ENCODE measurements at regions of chr17 and their contacts with region 1.

Region 1: DNA sequence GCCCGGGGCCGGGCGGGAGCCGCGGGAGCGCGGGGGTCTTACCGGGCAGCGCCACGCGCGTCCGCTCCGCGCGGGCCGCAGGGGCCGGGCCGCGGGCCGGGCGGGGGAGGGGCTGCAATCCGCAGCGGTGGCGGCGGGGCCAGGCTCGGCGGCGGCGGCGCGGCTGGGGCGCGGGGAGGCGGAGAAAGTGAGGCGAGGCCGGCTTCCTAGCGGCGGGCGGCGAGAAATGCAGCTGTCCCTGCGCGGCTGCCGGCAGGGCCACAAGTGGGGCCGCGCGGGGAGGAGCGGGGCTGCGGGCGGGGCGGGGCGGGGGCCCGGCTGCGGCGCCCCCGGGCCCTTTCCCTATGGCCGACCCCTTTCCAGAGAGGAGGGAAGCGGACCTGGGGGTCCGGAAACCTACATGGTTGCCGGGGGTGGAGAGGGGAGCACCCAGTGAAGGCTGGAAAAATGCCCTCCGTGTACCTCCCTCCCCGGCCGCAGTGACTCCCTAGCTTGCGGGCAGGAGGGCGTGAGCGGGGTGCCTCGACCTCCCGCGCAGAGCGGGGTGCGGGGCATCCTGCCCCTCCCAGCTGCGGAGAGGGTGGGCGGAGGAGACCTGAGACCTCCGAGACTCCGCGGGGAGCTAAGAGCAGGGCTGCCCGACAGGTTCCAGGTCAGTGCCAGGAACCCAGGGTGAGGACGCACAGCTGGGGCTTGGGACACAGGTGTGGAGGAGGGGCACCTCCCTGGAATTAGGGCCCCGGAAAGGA is at the start of gene CUEDC1:
- DNase-seq: peak; percentile 50 to 93 (median 86)

Region 2: DNA sequence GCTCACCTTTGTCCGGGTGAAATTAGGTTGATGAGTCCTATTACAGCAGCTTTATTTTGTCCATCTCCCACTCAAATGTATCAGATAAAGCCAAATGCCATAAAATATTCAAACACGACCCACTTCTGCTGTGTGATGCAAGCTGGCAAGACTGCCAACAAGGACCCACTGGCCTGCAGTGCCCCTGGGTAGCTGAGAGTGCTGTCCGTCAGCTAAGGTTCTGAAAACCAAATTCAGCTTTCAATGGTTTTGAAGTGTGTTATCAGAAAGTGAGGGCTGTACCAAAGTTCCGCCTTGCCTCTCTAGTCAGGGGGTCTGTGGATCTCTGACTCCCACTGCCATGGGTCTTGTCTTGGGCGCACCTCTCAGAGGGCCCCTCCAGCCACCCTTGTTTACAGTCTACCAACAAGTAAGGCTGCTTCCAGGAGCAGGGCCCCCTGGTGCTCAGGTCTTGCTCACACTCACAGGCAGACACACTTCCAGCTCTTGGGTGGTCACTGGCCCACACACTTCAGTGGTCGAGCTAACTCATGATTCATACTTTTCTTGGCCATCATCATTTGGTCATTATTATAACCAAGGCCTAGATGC is 199.8 kb before region 1 on chr17:
- intact Hi-C with region 1: no loop called
- DNase-seq: no peak

Region 3: GRCh38 chr17:57987580-57988421 is 32.4 kb after region 1 on chr17 and contains the start of gene VEZF1:
- intact Hi-C with region 1: loop called (anchors 2 kb)
- DNase-seq: peak; percentile 33 to 90 (median 76)

Measured in head of caudate nucleus (tissue), 42 donors.